Panc1 (cell line): ENCODE measurements at regions of chr5 and their contacts with region 1.

Region 1: GRCh38 chr5:96752341-96753016 is 55.3 kb downstream of the ERAP1 start:
- DNase-seq: peak; percentile 36
- ATAC-seq: no peak
- H3K4me3 ChIP-seq: no peak overlapping the region
- H3K27ac ChIP-seq: no peak overlapping the region
- H3K4me1 ChIP-seq: no peaks in the 10 kb centered on the region
- H3K27me3 ChIP-seq: no peaks in the 10 kb centered on the region
- CTCF ChIP-seq: peak; percentile 72; the same call in 1 of the 2 replicates

Region 2: DNA sequence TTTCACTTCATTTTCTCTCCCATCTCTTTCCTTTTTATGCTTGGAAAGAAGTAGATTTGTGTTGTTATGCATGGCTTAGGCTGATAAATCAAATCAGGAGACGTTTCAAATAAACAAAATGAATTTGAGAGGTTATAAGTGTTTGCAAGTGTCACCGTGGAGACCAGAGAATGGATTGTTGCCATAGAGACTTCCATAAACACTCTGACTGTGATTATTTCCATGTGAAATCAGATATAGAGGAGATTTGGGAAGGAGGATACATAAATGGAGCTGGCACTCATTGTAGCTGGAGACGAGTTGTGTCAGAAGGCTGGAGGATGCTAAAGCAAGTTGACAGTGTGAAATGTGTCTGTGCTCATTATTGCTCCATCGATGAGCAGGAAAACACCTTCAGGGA is 235.2 kb before region 1 on chr5:
- CTCF ChIA-PET with region 1: no interaction called
- POLR2A ChIA-PET with region 1: no interaction called
- in situ Hi-C with region 1: no loop called
- intact Hi-C with region 1: no loop called
- DNase-seq: no peak
- ATAC-seq: no peak
- H3K4me3 ChIP-seq: no peak overlapping the region
- H3K27ac ChIP-seq: no peak overlapping the region
- H3K4me1 ChIP-seq: no peaks in the 10 kb centered on the region
- H3K27me3 ChIP-seq: peaks cover 19% of the 10 kb centered on the region; the same call in 1 of the 2 replicates
- CTCF ChIP-seq: no peak

Region 3: GRCh38 chr5:96868603-96869371 is 116.3 kb after region 1 on chr5:
- CTCF ChIA-PET with region 1: no interaction called
- POLR2A ChIA-PET with region 1: no interaction called
- in situ Hi-C with region 1: no loop called
- intact Hi-C with region 1: loop called (anchors 2 kb)
- DNase-seq: peak; percentile 79
- ATAC-seq: peak; percentile 93
- H3K4me3 ChIP-seq: no peak overlapping the region
- H3K27ac ChIP-seq: no peak overlapping the region
- H3K4me1 ChIP-seq: no peaks in the 10 kb centered on the region
- H3K27me3 ChIP-seq: peaks cover 7% of the 10 kb centered on the region; the same call in 1 of the 2 replicates
- CTCF ChIP-seq: peak; percentile 92

Region 4: DNA sequence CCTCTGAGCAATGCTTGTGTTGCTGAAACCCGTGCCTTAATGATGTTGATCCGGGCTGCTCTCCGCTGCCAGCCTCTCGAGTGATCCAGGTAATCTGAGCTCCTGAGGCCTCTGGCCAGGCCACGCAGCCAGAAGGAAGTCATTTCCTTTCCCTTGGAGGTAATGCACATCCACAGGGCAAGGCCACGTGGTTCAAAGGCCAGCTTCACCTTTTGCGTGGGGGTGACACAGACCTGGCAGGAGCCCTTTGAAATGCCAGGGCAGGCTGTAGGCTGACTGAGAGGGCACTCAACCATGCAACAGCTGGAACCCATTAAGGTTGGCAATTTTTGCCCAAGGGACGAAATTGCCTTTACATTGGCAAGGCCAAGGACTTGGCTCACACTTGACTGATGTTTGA is 309.6 kb after region 1 on chr5:
- CTCF ChIA-PET with region 1: interaction called, 14 read pairs
- POLR2A ChIA-PET with region 1: no interaction called
- in situ Hi-C with region 1: no loop called
- intact Hi-C with region 1: no loop called
- DNase-seq: no peak
- ATAC-seq: no peak
- H3K4me3 ChIP-seq: no peak overlapping the region
- H3K27ac ChIP-seq: no peak overlapping the region
- H3K4me1 ChIP-seq: no peaks in the 10 kb centered on the region
- H3K27me3 ChIP-seq: peaks cover 7% of the 10 kb centered on the region
- CTCF ChIP-seq: no peak

Region 5: DNA sequence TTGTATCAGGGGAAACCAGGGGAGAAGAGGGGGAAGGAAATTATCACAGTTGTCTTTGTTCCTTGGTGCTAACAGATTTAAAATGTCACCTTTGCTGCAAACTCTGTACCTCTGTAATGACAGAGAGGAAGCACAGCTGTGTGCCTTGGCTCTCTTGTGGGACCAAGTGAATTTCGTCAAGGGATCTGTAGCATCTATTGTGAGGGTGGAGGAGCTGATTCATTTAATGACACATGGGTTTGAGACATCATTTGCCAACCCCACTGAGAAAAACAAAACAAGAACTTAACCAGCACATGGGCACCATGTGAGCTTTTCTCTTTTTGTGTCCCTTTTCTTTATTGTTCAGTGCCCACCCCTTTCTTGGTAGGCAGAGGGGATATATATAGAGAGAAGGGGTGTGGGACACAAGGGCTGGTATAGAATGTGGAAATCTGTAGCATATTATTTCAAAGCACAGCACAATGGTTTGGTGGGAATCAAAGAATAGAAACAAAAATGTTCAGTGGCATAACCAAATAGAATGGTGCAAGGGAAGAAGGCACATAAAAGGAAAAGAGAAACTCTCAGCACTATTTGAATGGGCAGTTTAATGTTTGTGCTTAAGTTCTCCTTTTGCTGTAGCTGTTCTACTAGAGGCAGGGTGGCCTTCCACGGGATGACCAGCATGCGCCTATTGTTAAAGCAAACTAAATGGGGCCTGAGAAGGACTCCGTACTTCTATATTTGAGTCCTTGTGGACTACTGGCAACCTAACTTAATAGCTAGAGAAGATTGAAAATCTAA is 326.7 kb after region 1 on chr5:
- CTCF ChIA-PET with region 1: interaction called, 21 read pairs
- POLR2A ChIA-PET with region 1: no interaction called
- in situ Hi-C with region 1: no loop called
- intact Hi-C with region 1: no loop called
- DNase-seq: no peak
- ATAC-seq: no peak
- H3K4me3 ChIP-seq: no peak overlapping the region
- H3K27ac ChIP-seq: no peak overlapping the region
- H3K4me1 ChIP-seq: no peaks in the 10 kb centered on the region
- H3K27me3 ChIP-seq: no peaks in the 10 kb centered on the region
- CTCF ChIP-seq: no peak

Region 6: DNA sequence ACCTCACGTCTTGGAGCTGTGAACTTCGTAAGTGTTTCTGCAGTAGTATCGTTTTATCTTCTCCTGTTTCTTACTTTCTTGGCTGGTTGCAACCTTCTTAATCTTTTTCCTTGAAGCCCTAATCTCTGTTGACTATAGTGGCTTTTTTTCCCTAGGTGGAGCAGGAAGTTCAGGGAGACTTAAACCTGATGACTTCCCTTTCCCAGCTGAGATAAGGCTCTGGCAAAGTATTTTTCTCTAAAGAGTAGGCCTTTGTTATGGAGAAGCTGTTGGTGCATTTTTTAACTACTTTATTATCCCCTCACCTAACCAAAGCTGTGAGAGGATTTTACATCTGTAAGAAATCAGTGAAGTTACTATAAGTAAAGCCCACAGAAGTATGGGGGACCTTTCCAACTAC is 1153.7 kb after region 1 on chr5:
- CTCF ChIA-PET with region 1: no interaction called
- POLR2A ChIA-PET with region 1: no interaction called
- in situ Hi-C with region 1: no loop called
- intact Hi-C with region 1: no loop called
- DNase-seq: no peak
- ATAC-seq: no peak
- H3K4me3 ChIP-seq: no peak overlapping the region
- H3K27ac ChIP-seq: no peak overlapping the region
- H3K4me1 ChIP-seq: no peaks in the 10 kb centered on the region
- H3K27me3 ChIP-seq: no peaks in the 10 kb centered on the region
- CTCF ChIP-seq: no peak